ENCODE measurements at regions of chr9 and their contacts with region 1.

Region 1: GRCh38 chr9:33919276-33919897 is 102.4 kb downstream of the UBE2R2 start:
- DNase-seq: no peak
- H3K4me3 ChIP-seq: no peak overlapping the region
- H3K27ac ChIP-seq: no peak overlapping the region
- H3K4me1 ChIP-seq: peaks cover 0 to 4% (median 0%) of the 10 kb centered on the region in 4 experiments; a peak in 1 of 7 replicates
- H3K27me3 ChIP-seq: no peaks in the 10 kb centered on the region
- CTCF ChIP-seq: no peak
- EP300 ChIP-seq: no peak
- POLR2A ChIP-seq: no peak; a peak in 1 of 3 replicates
- RAD21 ChIP-seq: no peak

Region 2: DNA sequence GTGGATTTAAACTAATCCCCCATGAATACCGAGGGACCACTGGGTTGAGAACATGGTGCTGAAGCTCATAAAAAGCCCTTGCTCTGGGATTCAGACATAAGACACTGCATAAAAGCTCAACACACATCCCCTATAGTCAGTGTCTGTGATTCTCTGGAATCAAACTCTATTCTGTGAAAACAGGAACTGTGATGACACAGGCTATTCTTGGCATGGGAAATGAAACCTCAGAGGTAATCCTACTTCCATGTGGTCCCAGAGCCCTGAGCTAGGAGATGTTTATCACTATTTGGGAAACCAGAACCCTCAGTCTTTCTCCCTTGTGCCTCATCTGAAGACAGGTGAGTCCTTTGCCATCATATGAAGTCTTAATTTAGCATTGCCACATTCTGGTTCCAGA is 259.5 kb before region 1 on chr9:
- CTCF ChIA-PET with region 1: no interaction called
- POLR2A ChIA-PET with region 1: no interaction called
- DNase-seq: no peak
- H3K4me3 ChIP-seq: no peak overlapping the region
- H3K27ac ChIP-seq: no peak overlapping the region
- H3K4me1 ChIP-seq: no peaks in the 10 kb centered on the region
- H3K27me3 ChIP-seq: no peaks in the 10 kb centered on the region
- CTCF ChIP-seq: no peak
- EP300 ChIP-seq: no peak
- POLR2A ChIP-seq: no peak
- RAD21 ChIP-seq: no peak

Region 3: DNA sequence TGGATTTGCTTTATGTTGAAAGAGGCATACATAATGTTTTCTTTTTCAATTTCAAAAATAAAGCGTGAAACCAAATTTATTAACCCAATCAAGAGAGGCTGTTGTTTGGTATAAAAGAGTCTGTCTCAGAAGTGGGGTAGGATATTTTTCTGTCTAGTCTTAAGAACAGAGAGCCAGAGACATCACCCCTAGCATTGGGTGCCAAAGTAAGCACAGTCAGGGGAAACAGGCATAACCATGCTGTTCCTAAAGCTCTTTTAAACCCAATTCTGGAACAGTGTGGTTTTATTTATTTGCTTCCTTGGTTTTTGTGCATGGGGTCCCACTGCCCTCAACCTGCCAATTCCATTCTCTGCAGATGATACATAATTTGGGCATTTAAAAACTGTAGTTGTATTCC is 14.2 kb before region 1 on chr9:
- CTCF ChIA-PET with region 1: interaction called, 16 read pairs
- POLR2A ChIA-PET with region 1: interaction called, 4 read pairs
- DNase-seq: no peak
- H3K4me3 ChIP-seq: no peak overlapping the region
- H3K27ac ChIP-seq: no peak overlapping the region
- H3K4me1 ChIP-seq: peaks cover 0 to 6% (median 2%) of the 10 kb centered on the region in 4 experiments; a peak in 2 of 7 replicates
- H3K27me3 ChIP-seq: no peaks in the 10 kb centered on the region
- CTCF ChIP-seq: no peak
- EP300 ChIP-seq: no peak
- POLR2A ChIP-seq: no peak
- RAD21 ChIP-seq: no peak

Measured in H1 (cell line).